ENCODE measurements at regions of chr10 and their contacts with region 1.

Region 1: DNA sequence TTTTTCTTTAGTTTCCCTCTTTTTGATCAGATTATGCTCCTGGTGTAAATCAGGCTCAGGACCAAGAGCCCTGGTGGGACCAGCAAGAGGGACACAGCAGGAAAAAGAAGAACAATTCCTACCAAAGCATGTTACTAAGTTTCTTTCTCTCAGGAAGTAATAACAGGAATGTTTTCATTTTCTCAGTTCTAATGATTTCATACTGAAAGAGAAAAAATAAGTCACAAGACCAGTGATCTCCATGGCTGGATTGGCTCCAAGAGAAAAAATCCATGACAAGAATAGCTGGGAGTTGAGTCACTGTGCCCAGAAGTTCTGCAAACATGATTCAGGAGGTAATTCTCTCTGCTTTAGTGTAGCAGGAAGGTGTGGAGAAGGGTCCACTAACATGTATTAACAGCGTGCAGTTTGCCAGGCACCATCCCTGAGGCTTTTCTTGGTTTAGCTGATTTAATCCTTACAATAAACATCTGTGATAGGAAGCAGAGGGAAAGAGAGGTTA is 23.8 kb upstream of the IFIT2 start:
- DNase-seq: no peak

Region 2: DNA sequence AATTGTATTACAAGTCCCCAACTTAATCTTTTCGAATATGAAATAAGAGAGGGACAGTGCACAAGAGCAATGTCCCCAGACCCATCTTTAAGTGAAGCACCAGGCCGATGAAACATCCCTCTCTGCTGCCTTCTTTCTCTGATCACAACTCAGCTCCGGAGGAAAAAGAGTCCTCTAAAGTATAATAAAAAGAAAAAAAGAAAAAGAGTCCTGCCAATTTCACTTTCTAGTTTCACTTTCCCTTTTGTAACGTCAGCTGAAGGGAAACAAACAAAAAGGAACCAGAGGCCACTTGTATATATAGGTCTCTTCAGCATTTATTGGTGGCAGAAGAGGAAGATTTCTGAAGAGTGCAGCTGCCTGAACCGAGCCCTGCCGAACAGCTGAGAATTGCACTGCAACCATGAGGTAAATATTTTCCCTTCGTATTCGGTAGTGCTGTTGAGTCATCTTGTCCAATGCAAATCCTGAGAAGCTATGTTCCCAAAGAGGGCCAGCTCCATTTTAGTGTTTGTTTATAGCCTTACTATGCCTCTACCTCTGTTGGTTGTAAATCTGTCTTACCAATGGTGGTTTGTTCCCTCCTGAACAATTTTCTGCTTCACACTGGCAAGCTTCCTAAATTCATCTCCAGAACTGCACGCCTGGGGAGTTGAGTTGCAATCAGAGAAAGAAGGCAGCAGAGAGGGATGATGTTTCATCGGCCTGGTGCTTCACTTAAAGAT is 23.8 kb after region 1 on chr10 and contains the start of gene IFIT2:
- intact Hi-C with region 1: loop called (anchors 2 kb)
- DNase-seq: no peak
- total RNA-seq, gene IFIT2: 4.3 TPM

Region 3: DNA sequence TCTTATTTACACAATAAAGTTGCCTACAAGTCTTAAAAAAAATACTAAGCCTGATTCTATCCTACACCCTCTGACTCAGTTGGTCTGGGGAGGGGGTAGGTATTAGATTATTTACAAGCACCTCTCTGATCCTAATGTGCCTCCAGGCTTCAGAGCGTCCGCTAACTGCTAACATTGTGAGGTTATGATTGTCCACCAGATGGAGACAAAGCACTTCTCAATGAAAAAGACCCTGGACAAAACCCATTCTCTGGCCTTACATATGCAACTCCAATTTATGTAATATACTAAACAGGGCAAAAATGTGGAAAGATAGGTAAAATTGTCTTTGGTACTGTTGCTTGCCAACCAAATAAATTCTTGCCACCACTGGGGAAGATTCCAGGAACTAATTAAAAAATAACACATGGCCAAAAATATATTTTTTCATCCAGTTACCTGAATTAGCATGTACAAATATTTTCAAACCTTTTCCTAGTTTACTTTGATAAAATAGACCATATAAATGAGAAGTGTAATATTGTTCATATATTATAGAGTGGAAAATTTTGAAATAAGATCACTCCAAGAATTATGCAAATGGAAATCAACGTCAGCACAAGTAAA is 515.7 kb after region 1 on chr10:
- intact Hi-C with region 1: no loop called
- DNase-seq: no peak